Activated T-helper 1 cell treated with anti-CD3 and anti-CD28 coated beads, Interleukin-12 subunit alpha, Interleukin-12 subunit beta, Interleukin-2, Interleukin-4 antibody, amounts not matched to agents 30 ng/mL and 10 ng/mL and 1 ng/mL, durations not matched to agents 14 hours and 24 hours and 36 hours (primary cell): ENCODE measurements at regions of chr22 and their contacts with region 1.

Region 1: DNA sequence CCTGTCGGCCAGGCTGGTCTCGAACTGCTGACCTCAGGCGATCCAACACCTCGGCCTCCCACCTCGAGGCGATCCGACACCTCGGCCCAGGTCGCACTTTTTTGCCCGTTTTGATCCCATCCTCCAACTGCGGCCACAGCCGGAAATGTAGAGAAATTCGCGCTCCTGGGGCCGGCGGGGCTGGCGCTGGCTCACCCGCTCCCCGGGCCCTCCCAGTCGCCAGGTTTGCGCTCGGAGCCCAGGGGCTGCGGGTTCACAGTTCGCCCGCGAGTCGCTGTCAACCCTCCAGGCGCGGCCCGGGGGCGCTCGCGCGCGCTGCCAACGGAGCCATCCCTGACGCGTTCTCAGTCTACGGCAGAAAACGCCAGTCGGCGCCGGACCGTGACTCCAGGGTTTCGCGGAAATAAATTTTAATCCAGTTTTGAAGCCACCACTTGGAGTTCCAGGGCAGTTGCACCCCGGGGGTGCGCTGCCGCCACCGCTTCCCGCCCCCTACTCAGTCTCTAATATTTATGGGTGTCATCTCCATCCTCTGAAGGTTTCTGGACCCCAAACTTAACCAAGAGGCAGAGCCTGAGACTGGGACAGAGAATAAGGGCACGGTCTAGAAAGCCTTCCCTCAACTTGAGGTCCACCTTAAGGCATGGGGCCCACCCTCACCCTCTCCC is 1.5 kb upstream of the KLHDC7B start:
- DNase-seq: peak; percentile 80
- H3K4me3 Mint-ChIP-seq: peak overlapping the region; percentile 59
- H3K27ac Mint-ChIP-seq: peak overlapping the region; percentile 84
- H3K4me1 Mint-ChIP-seq: peaks cover 51% of the 10 kb centered on the region
- H3K27me3 Mint-ChIP-seq: no peaks in the 10 kb centered on the region

Region 2: GRCh38 chr22:50016988-50017700 is 527.1 kb before region 1 on chr22:
- intact Hi-C with region 1: loop called (anchors 5 kb)
- DNase-seq: no peak
- H3K4me3 Mint-ChIP-seq: peak overlapping the region; percentile 19
- H3K27ac Mint-ChIP-seq: peak overlapping the region; percentile 45
- H3K4me1 Mint-ChIP-seq: peaks cover 9% of the 10 kb centered on the region
- H3K27me3 Mint-ChIP-seq: peaks cover 2% of the 10 kb centered on the region

Region 3: GRCh38 chr22:50507991-50508884 is 36.0 kb before region 1 on chr22 and contains the start of gene NCAPH2:
- intact Hi-C with region 1: no loop called
- DNase-seq: peak; percentile 97
- H3K4me3 Mint-ChIP-seq: peak within 1 kb of the TSS; percentile 96
- H3K27ac Mint-ChIP-seq: peak within 1 kb of the TSS; percentile 95
- H3K4me1 Mint-ChIP-seq: peaks cover 24% of the 10 kb centered on the region
- H3K27me3 Mint-ChIP-seq: no peaks in the 10 kb centered on the region
- total RNA-seq, gene NCAPH2: 133 and 134 TPM in 2 replicates

Region 4: GRCh38 chr22:50525390-50526068 is 18.7 kb before region 1 on chr22 and contains the start of gene SCO2:
- intact Hi-C with region 1: loop called (anchors 1 kb)
- DNase-seq: peak; percentile 97
- H3K4me3 Mint-ChIP-seq: peak within 1 kb of the TSS; percentile 94
- H3K27ac Mint-ChIP-seq: peak within 1 kb of the TSS; percentile 88
- H3K4me1 Mint-ChIP-seq: peaks cover 34% of the 10 kb centered on the region
- H3K27me3 Mint-ChIP-seq: no peaks in the 10 kb centered on the region
- total RNA-seq, gene SCO2: 8.7 and 14.8 TPM in 2 replicates

Region 5: DNA sequence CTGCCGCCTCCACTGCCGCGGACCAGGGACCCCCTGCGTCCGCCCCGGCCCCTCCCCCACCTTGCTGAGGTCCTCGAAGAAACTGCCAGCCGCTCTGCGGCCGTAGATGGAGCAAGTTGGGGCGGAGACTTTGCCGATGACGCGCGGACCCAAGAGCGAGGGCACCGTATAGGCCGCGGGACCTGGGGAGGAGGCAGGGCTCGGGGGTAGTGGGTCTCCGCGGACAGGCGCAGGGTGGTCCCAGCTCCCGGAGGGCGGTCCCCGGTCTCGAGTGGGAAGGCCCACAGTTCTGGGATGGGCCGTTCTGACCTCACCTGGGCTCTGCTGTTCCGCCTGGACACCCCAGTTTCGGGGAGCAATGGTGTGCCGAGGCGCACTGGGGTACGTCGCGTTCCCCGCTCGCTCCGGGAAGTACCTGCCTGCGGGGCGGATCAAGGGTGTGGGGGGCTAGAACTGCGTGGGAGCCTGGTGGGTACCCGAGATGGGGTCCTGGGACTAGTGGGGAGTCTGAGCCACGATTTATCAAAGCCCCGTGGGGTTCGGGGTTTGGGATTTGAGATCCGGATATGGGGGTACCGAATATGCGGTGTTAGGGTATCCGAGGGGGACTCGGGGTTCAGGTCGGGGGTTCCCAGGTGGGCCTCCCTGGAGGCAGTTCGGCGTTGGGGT is 13.2 kb before region 1 on chr22:
- intact Hi-C with region 1: loop called (anchors 1 kb)
- DNase-seq: peak; percentile 83
- H3K4me3 Mint-ChIP-seq: peak overlapping the region; percentile 93
- H3K27ac Mint-ChIP-seq: peak overlapping the region; percentile 99
- H3K4me1 Mint-ChIP-seq: peaks cover 48% of the 10 kb centered on the region
- H3K27me3 Mint-ChIP-seq: no peaks in the 10 kb centered on the region

Region 6: GRCh38 chr22:50562523-50563412 is 18.6 kb after region 1 on chr22 and contains the start of gene SYCE3:
- intact Hi-C with region 1: loop called (anchors 1 kb)
- DNase-seq: peak; percentile 98
- H3K4me3 Mint-ChIP-seq: peak within 1 kb of the TSS; percentile 88
- H3K27ac Mint-ChIP-seq: peak within 1 kb of the TSS; percentile 77
- H3K4me1 Mint-ChIP-seq: peaks cover 20% of the 10 kb centered on the region
- H3K27me3 Mint-ChIP-seq: peaks cover 9% of the 10 kb centered on the region
- total RNA-seq, gene SYCE3: 0.83 TPM in 1 of 2 replicates, not detected in the other